Breast epithelium (tissue), 4 donors: ENCODE measurements at regions of chr2 and their contacts with region 1.

Region 1: DNA sequence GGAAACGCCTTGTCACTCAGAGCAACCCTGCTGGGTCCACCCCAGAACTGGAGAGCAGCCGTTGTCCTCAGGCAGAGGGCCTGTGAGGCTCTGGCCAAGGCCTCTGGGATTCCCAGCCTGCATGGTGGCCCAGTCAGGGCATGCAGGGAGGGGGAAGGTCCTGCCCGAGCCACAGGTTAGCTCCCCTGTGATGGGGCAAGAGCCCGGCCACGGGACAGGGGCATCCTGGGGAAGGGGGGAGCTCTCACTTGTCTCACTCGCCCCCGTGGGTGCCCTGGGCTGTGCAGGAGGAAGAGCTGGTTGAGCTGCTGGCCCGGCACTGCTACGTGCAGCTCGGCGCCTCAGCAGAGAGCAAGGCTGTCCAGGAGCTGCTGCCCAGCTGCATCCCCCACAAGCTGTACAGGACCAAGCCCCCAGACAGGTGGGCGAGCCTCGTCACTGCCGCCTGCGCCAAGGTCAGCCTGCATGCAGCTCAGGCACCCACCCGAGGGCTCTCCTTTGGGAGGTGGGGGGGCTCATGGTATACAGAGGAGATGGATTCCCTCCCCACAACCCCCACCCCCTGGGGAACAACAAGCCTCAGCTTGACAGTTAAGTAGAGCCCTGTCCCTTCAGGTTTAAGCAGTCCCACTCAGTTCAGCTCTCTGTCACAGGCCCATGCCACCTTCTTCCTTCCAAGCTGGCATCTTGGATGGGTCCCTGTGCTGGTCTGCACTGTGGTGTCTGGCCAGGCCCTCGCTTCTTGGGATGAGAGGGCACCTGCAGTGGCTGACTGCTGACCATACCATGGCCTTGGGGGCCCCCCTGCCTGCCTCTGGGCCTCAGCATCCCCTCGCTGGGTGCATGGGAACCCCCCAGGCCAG is 20.6 kb upstream of the GPR17 start:
- DNase-seq: no peak
- H3K4me3 ChIP-seq: no peak overlapping the region
- H3K27ac ChIP-seq: no peak overlapping the region
- H3K4me1 ChIP-seq: no peaks in the 10 kb centered on the region
- H3K27me3 ChIP-seq: no peaks in the 10 kb centered on the region
- CTCF ChIP-seq: no peak
- POLR2A ChIP-seq: no peak

Region 2: GRCh38 chr2:126850940-126851339 is 774.4 kb before region 1 on chr2:
- intact Hi-C with region 1: no loop called
- DNase-seq: no peak
- H3K4me3 ChIP-seq: no peak overlapping the region
- H3K27ac ChIP-seq: no peak overlapping the region
- H3K4me1 ChIP-seq: no peaks in the 10 kb centered on the region
- H3K27me3 ChIP-seq: no peaks in the 10 kb centered on the region
- CTCF ChIP-seq: no peak
- POLR2A ChIP-seq: no peak

Region 3: DNA sequence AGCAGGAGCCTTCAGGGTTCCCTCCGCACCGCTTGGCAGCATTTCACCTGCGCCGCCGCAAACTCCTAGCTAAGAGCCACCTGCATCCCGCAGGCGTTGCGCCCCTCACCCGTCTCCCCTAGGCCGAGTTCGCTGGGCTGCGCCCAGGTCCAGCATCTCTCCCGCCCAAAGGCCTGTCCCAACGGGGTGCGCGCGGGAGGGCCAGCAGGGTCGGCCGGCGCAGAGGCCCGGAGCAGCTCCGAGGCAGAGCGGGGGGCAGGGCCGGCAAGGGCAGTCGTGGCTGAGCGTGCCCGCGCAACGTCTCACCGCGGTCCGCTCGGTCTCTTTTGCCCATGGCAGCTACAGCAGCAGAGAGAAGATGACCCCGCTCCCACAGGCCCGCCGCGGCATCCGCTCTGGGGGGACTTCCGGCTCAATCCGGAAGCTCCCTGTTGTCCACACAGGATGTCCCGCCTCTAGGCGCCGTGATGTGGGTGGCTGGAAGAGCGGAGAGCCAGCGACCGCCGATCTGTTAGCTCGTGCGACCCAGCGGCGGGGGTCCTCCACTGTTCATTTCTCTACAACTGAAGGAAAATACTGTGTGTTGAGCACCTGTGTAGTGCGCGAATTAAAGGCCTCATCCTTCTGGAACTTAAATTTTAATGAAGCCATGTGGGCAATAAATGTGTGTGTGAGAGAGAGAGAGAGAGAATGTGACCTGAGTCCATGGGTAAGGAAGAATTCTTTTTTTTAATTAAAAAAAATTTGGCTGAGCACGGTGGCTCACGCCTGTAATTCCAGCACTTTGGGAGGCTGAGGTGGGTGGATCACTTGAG is 331.4 kb before region 1 on chr2 and contains the start of gene ERCC3:
- intact Hi-C with region 1: loop called (anchors 5 kb)
- DNase-seq: peak; percentile 60 to 73
- H3K4me3 ChIP-seq: peak within 1 kb of the TSS; percentile 85 to 88 (median 86)
- H3K27ac ChIP-seq: peak within 1 kb of the TSS; percentile 71 to 85
- H3K4me1 ChIP-seq: peaks cover 0 to 6% of the 10 kb centered on the region in 2 donors
- H3K27me3 ChIP-seq: no peaks in the 10 kb centered on the region
- CTCF ChIP-seq: peak in 1 of 3 donors; percentile 7
- POLR2A ChIP-seq: no peak
- total RNA-seq, gene ERCC3: 37.3 to 55.2 (median 41.0) TPM

Region 4: DNA sequence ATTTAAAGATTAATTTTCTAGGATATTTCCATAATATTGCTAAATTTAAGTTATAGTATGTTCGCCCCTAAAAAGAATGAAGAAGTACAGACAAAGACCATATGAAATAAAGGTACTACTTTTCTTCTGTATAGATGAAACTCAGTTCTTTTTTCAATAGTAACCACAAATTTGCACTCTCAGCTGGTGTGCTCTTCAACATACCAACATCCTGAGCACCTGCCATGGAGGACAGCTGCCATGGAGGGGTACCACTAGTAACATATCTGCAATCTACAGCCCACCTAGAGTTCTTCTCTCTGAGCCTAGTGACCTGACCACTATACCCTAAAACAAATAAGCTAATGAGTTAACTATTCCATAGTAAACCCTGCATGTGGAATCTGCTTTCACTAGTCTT is 294.6 kb before region 1 on chr2:
- intact Hi-C with region 1: no loop called
- DNase-seq: no peak
- H3K4me3 ChIP-seq: no peak overlapping the region
- H3K27ac ChIP-seq: no peak overlapping the region
- H3K4me1 ChIP-seq: no peaks in the 10 kb centered on the region
- H3K27me3 ChIP-seq: no peaks in the 10 kb centered on the region
- CTCF ChIP-seq: no peak
- POLR2A ChIP-seq: no peak